Psoas muscle (tissue), 8 donors: ENCODE measurements at regions of chr9 and their contacts with region 1.

Region 1: DNA sequence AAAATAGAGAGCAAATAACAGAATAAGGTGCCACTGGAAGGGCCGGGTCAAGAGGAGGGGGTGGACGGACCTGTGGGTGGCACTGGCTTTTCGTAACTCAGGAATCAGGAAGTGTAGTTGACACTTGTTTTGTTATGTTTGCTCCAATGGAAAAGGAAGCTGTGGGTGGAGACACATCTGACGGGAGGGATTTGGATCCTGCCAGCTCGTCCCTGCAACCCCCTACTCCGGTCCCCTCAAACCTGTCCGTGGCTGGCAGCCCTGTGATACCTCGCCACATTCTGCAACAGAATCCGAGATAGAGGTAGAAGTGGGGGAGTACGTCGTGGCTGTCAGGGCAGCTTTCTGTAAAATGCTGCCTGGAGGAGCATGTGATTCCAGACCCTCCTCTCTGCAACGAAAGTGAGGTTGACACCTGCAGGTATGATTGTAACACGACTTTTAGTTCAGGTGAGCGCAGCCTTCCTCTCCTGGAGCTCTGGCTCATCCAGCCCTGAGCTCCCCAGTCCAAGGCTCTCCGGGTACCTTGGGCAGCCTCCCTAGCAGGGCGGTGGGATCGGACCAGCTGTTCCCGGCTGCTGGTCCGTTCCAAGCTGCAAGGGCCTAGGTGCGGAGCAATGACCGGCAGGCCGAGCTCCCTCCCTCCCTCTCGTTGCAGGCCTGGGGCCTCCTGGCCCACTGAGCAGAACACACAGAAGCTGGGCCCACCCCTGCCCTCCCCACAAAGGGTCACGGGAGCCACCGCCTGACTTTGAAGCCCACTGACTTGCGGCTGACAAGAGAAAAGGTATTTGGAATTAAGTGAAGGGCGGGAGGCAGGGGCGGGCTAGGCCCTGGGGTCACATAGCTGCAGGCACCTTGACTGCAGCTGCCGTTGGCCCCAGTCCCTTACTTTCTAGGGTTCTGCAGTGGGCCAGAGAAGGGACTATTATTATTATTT is 104.5 kb upstream of the IER5L start:
- DNase-seq: peak in 1 of 2 donors; percentile 48
- ATAC-seq: no peak
- H3K4me3 ChIP-seq: peak overlapping the region; percentile 57
- H3K27ac ChIP-seq: no peak overlapping the region
- H3K4me1 ChIP-seq: no peaks in the 10 kb centered on the region
- H3K27me3 ChIP-seq: no peaks in the 10 kb centered on the region
- CTCF ChIP-seq: no peak

Region 2: GRCh38 chr9:129225815-129226214 is 56.7 kb before region 1 on chr9:
- intact Hi-C with region 1: no loop called
- DNase-seq: peak; percentile 76 to 79
- ATAC-seq: peak; percentile 43 to 67 (median 47)
- H3K4me3 ChIP-seq: no peak overlapping the region
- H3K27ac ChIP-seq: peak overlapping the region; percentile 30
- H3K4me1 ChIP-seq: no peaks in the 10 kb centered on the region
- H3K27me3 ChIP-seq: no peaks in the 10 kb centered on the region
- CTCF ChIP-seq: no peak

Region 3: GRCh38 chr9:129242941-129243561 is 39.5 kb before region 1 on chr9:
- intact Hi-C with region 1: loop called in 1 of 2 experiments (anchors 5 kb)
- DNase-seq: peak; percentile 77 to 84
- ATAC-seq: peak; percentile 57 to 84 (median 76)
- H3K4me3 ChIP-seq: no peak overlapping the region
- H3K27ac ChIP-seq: peak overlapping the region; percentile 2
- H3K4me1 ChIP-seq: no peaks in the 10 kb centered on the region
- H3K27me3 ChIP-seq: peaks cover 0 to 8% (median 2%) of the 10 kb centered on the region in 3 donors
- CTCF ChIP-seq: no peak

Region 4: DNA sequence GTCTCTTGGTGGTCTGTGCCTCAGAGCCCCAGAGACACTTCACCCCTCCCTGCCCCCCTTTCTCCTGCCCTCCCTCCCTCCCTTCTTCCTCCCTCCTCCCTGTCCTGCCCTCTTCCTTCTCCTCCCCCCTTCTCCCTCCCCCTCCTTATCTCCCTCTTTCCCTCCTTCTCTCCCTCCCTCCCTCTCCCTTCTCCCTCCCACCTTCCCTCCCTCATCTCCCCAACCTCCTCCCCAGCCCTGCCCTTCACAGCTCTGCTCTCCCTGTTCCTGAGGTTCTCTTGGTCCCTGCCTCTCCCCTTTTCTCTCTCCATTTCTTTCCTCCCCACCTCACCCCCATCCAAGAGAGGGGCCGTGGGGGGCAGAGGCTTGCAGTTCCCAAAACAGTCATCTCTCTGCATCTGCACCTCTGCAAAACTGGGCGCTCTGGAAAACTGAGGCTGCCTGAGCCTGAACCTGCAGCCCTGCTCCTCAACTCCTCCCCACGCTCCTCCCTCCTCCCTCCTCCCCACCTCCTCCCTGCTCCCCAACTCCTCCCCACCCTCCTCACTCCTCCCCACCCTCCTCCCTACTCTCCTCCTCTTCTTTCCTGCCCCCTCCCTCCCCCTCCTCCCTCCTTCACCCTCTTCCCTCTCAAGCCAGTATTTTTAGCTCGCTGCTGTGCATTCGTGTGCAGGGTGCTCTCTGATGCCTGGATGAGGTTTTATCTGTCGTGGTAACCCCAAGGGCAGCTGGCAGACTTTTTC is 119.3 kb after region 1 on chr9:
- intact Hi-C with region 1: no loop called
- DNase-seq: peak; percentile 10 to 48
- ATAC-seq: no peak
- H3K4me3 ChIP-seq: peak overlapping the region; percentile 22
- H3K27ac ChIP-seq: no peak overlapping the region
- H3K4me1 ChIP-seq: no peaks in the 10 kb centered on the region
- H3K27me3 ChIP-seq: peaks cover 0 to 1% (median 0%) of the 10 kb centered on the region in 3 donors
- CTCF ChIP-seq: no peak